Mammary epithelial cell (primary cell): ENCODE measurements at regions of chr6 and their contacts with region 1.

Region 1: DNA sequence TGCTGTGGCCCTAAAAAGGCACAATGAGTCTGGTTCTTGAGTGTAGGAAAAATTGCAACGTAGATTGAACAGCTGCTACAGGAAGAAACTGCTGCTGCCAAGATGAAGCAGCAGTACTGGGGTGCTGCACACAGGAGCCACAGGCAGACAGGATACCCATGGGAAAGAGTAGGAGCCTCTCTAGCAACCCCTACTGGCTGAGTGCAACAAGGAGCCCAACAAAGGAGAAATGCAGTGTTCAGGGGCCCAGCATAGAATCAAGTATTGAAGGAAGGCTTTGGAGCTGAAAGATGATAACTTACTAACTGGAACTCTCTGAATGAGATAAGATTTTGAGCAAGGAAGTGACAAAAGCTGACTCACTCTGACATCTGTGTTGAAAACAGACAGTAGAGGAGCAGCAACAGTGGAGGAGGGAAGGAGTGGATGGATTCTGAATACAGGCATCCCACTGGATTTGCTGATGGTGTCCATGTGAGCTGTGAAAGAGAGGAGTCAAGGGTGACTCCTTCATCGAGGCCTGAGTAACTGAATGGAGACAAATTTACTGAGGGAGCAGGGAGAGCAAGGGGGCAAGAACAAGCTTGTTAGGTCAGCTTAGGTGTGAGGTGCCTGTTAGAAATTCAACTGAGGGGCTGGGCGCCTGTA is 534.7 kb upstream of the JARID2 start:
- DNase-seq: peak; percentile 78
- H3K4me3 ChIP-seq: no peak overlapping the region
- H3K27ac ChIP-seq: peak overlapping the region; percentile 67
- H3K4me1 ChIP-seq: peaks cover 49% of the 10 kb centered on the region
- H3K27me3 ChIP-seq: no peaks in the 10 kb centered on the region
- CTCF ChIP-seq: peak; percentile 70 to 86

Region 2: DNA sequence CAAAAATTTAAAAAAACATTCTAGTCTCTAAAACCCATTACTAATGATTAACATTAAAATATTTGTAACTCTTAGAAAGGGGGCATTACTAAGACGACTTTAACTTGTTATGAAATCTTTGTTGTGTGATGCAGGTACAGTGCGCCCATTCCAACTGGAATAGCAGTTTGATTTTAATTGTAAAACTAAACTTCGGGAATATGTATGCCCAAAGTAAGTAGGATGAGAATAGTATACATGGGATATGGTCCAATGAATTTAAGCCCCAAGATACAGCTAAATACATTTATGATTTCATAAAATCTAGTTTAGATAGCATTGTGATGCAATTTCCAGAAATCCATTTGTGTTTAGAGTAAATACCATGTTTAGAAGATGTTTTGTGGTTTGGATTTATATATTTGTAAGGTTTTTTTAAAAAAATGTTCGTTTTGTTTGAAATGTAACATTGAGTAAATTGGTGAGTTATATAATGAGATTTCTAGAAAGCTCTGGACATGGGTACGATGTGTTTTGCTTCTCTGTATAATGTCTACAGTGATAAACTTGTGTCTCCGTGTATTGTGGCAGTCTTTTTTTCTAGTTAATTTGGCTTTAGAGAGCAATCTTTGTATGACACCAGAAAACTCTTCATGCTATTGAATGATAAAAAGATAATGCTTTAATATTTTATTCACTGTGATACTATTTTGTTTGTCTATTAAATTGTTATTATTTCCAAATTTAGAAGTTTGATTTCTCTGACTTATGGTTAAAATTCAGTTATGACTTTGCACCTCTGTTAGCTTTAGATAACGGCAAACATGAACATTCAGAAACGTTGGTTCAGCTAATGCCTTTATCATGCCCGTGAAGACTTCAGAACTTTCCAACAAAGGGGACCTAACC is 731.7 kb before region 1 on chr6:
- CTCF ChIA-PET with region 1: no interaction called
- dilution Hi-C with region 1: no loop called
- in situ Hi-C with region 1: no loop called
- intact Hi-C with region 1: no loop called
- DNase-seq: no peak
- H3K4me3 ChIP-seq: no peak overlapping the region
- H3K27ac ChIP-seq: no peak overlapping the region
- H3K4me1 ChIP-seq: no peaks in the 10 kb centered on the region
- H3K27me3 ChIP-seq: no peaks in the 10 kb centered on the region
- CTCF ChIP-seq: no peak

Region 3: GRCh38 chr6:14321992-14322772 is 389.0 kb before region 1 on chr6:
- CTCF ChIA-PET with region 1: no interaction called
- dilution Hi-C with region 1: no loop called
- in situ Hi-C with region 1: no loop called
- intact Hi-C with region 1: loop called (anchors 5 kb)
- DNase-seq: no peak
- H3K4me3 ChIP-seq: no peak overlapping the region
- H3K27ac ChIP-seq: no peak overlapping the region
- H3K4me1 ChIP-seq: no peaks in the 10 kb centered on the region
- H3K27me3 ChIP-seq: no peaks in the 10 kb centered on the region
- CTCF ChIP-seq: peak in 1 of 2 donors; percentile 43

Region 4: GRCh38 chr6:14584450-14584849 is 126.7 kb before region 1 on chr6:
- CTCF ChIA-PET with region 1: no interaction called
- dilution Hi-C with region 1: no loop called
- in situ Hi-C with region 1: no loop called
- intact Hi-C with region 1: no loop called
- DNase-seq: no peak
- H3K4me3 ChIP-seq: no peak overlapping the region
- H3K27ac ChIP-seq: no peak overlapping the region
- H3K4me1 ChIP-seq: no peaks in the 10 kb centered on the region
- H3K27me3 ChIP-seq: peaks cover 13% of the 10 kb centered on the region
- CTCF ChIP-seq: no peak

Region 5: DNA sequence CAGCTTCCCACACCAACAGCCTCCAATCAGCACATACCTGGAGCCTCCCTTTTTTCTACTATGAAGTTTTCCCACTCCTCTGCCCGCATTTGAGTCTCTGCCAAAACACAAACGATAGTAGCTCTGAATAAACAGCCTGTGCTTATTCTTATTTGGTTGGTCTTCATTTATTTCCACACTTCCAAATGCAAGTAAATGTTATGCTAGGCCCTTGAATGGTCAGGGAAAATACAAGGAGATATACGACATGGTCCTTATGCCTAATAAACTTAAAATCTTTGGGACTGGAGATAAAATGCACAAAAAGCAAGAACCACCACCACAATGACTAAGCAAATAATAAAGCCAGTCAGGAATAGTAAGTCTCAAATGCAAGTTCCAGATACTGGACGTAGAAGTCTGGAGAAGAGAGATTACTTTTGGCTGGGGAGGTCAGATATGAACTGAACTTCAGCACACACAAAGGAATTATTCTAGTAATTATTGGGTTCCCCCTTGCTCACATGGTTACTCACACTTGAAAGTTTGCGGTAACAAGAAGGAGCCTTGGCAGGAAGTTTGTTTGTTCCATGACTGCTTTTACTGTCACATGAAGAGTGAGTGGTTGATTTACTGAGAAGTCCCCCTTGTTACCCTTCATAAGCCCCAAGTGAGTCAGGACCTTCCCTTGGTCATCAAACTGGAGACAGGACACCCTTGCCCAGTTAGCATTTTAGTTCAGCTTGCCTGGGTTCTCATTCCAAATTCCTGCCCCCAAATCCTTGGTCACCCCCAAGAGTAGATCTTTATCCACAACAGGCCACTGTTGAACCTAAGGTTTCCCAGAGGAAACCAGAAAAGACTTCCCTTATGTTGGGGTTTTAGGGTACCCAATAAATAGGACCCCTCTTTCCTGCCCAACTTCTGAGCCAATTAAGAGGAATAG is 23.5 kb after region 1 on chr6:
- CTCF ChIA-PET with region 1: interaction called, 3 read pairs
- dilution Hi-C with region 1: no loop called
- in situ Hi-C with region 1: no loop called
- intact Hi-C with region 1: loop called (anchors 1 kb)
- DNase-seq: peak; percentile 67
- H3K4me3 ChIP-seq: no peak overlapping the region
- H3K27ac ChIP-seq: peak overlapping the region; percentile 99
- H3K4me1 ChIP-seq: peaks cover 36% of the 10 kb centered on the region
- H3K27me3 ChIP-seq: no peaks in the 10 kb centered on the region
- CTCF ChIP-seq: no peak

Region 6: DNA sequence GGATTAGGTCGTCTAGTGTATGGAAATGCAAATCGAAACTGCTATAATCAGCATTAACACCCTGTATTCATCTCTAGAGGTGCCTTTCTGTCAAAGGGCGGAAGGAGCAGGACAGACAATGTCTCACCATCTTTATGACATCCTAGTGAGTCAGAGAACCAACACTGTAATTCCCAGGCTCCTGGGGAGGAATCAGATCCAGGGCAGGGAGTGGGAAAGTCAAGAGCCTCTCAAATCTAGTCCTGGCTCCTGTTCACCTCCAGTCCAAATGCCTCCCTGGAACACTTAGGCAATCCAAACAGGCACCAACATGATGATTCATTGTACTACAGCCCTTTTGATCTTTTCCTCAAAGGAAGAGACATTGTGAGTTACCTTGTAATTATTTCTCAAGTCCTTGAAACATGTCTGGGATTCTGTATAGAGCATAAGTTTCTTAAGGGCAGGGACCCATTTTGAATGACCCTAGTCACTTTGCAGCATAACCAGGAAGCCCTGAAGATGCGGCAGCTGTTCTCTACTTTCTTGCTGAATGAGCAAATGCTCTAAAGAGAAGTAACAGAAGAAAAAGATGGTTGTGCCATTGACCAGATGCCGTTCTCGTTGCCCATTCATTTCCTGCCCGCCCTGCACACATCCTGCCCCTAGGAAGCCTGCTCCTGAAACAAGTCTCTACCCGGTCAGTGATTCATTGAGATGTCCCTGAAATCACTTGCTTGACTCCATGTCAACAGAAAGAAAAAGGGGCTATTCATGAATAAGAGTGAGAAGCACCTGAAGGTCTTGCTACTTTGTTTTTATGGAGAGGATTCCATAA is 421.9 kb after region 1 on chr6:
- CTCF ChIA-PET with region 1: no interaction called
- dilution Hi-C with region 1: no loop called
- in situ Hi-C with region 1: no loop called
- intact Hi-C with region 1: loop called (anchors 1 kb)
- DNase-seq: peak; percentile 99
- H3K4me3 ChIP-seq: peak overlapping the region in 2 of 3 experiments; percentile 35 to 36
- H3K27ac ChIP-seq: peak overlapping the region; percentile 92
- H3K4me1 ChIP-seq: peaks cover 30% of the 10 kb centered on the region
- H3K27me3 ChIP-seq: no peaks in the 10 kb centered on the region
- CTCF ChIP-seq: no peak

Region 7: GRCh38 chr6:15441215-15441868 is 730.2 kb after region 1 on chr6:
- CTCF ChIA-PET with region 1: no interaction called
- dilution Hi-C with region 1: no loop called
- in situ Hi-C with region 1: no loop called
- intact Hi-C with region 1: loop called (anchors 2 kb)
- DNase-seq: peak; percentile 50
- H3K4me3 ChIP-seq: no peak overlapping the region
- H3K27ac ChIP-seq: no peak overlapping the region
- H3K4me1 ChIP-seq: peaks cover 33% of the 10 kb centered on the region
- H3K27me3 ChIP-seq: no peaks in the 10 kb centered on the region
- CTCF ChIP-seq: peak; percentile 81 to 88